ENCODE measurements at regions of chr1 and their contacts with region 1.

Region 1: GRCh38 chr1:147670317-147671041 is at the start of gene ACP6:
- DNase-seq: peak; percentile 98
- H3K4me3 ChIP-seq: peak within 1 kb of the TSS; percentile 81
- H3K27ac ChIP-seq: peak within 1 kb of the TSS; percentile 62
- H3K4me1 ChIP-seq: peaks cover 19% of the 10 kb centered on the region
- H3K27me3 ChIP-seq: no peaks in the 10 kb centered on the region
- CTCF ChIP-seq: no peak
- total RNA-seq, gene ACP6: 14.4 and 15.3 TPM in 2 replicates

Region 2: DNA sequence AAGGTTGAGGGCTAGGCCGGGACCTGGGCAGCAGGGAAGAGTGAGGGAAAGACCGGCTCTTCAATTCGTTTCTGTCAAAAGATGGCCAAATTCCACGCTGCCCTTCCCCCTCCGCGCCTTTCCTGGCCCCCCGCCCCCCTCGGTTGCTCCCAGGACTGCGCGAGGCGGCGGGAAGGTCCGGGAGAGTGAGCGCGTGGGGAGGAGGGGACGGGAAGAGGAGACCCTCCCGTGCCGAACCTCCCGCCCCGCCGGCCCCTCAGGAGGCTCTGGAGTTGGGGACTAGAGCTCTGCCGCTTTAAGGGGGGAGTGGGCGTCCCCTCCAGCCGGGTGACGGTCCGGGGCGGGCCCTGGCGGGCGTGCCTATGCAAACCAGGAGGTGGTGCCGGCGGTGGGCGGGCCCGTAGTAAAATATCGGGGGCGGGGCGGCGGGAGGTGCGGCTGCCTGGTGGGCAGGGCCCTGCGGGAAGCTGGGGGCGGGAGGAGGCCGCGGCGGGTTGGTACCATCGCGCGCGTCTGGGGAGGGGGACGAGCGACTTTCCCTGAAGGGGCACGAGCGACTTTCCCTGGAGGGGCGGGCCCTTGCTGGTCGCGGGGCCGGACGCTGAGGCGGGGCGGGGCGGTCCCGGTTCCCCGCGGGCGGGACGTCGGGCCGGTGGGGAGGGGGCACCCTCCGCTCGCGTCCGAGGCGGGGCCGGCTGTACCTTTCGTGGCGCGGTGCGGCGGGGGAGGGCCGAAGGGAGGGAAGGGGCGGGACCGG is 70.9 kb before region 1 on chr1:
- CTCF ChIA-PET with region 1: no interaction called
- POLR2A ChIA-PET with region 1: no interaction called
- intact Hi-C with region 1: loop called (anchors 5 kb)
- DNase-seq: peak; percentile 97
- H3K4me3 ChIP-seq: peak overlapping the region; percentile 56
- H3K27ac ChIP-seq: peak overlapping the region; percentile 70
- H3K4me1 ChIP-seq: peaks cover 5% of the 10 kb centered on the region
- H3K27me3 ChIP-seq: no peaks in the 10 kb centered on the region
- CTCF ChIP-seq: no peak

Measured in A673 (cell line).